Mucosa of descending colon (tissue), 3 donors: ENCODE measurements at regions of chr16 and their contacts with region 1.

Region 1: DNA sequence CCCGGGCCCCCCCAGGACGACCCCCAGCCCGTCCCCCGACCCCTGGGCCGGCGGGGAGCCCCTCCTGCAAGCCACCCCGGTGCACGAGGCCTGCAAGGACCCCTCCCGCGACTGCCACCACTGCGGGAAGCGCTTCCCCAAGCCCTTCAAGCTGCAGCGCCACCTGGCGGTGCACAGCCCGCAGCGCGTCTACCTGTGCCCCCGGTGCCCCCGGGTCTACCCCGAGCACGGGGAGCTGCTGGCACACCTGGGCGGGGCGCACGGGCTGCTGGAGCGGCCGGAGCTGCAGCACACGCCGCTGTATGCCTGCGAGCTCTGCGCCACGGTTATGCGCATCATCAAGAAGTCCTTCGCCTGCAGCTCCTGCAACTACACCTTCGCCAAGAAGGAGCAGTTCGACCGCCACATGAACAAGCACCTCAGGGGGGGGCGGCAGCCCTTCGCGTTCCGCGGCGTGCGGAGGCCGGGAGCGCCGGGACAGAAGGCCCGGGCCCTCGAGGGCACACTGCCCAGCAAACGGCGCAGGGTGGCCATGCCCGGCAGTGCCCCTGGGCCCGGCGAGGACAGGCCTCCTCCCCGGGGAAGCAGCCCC is 15.6 kb upstream of the ZFPM1 start:
- DNase-seq: peak in 2 of 3 donors; percentile 62 to 74
- ATAC-seq: peak; percentile 68
- H3K4me3 ChIP-seq: no peak overlapping the region
- H3K4me1 ChIP-seq: peaks cover 3% of the 10 kb centered on the region
- CTCF ChIP-seq: peak; percentile 81

Region 2: DNA sequence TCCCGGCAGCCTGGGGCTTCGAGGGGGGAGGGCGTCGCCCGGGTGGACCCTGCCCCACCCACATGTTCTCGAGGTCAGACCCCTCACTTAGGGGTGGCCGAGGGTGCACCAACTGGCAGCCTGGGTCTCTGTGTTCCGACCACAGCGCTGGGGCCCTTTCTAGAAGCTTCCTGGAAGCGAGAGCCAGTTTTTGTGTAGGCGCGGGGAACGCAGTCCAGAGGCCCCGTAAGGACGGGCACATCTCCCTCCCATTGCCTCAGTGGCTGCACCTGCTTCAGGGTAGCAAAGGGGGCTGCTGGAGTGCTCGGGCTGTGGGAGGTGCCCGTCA is 337.9 kb before region 1 on chr16:
- intact Hi-C with region 1: no loop called
- DNase-seq: no peak
- ATAC-seq: no peak
- H3K4me3 ChIP-seq: no peak overlapping the region
- H3K4me1 ChIP-seq: no peaks in the 10 kb centered on the region
- CTCF ChIP-seq: no peak

Region 3: GRCh38 chr16:88194397-88195268 is 242.8 kb before region 1 on chr16:
- intact Hi-C with region 1: loop called in 1 of 2 experiments (anchors 10 kb)
- DNase-seq: peak in 1 of 3 donors; percentile 24
- ATAC-seq: peak; percentile 62
- H3K4me3 ChIP-seq: no peak overlapping the region
- H3K4me1 ChIP-seq: no peaks in the 10 kb centered on the region
- CTCF ChIP-seq: no peak

Region 4: GRCh38 chr16:88556294-88556988 is 119.0 kb after region 1 on chr16:
- intact Hi-C with region 1: loop called (anchors 2 to 10 kb)
- DNase-seq: no peak
- ATAC-seq: no peak
- H3K4me3 ChIP-seq: no peak overlapping the region
- H3K4me1 ChIP-seq: peaks cover 5% of the 10 kb centered on the region
- CTCF ChIP-seq: no peak